BJ (cell line): ENCODE measurements at regions of chr19 and their contacts with region 1.

Region 1: DNA sequence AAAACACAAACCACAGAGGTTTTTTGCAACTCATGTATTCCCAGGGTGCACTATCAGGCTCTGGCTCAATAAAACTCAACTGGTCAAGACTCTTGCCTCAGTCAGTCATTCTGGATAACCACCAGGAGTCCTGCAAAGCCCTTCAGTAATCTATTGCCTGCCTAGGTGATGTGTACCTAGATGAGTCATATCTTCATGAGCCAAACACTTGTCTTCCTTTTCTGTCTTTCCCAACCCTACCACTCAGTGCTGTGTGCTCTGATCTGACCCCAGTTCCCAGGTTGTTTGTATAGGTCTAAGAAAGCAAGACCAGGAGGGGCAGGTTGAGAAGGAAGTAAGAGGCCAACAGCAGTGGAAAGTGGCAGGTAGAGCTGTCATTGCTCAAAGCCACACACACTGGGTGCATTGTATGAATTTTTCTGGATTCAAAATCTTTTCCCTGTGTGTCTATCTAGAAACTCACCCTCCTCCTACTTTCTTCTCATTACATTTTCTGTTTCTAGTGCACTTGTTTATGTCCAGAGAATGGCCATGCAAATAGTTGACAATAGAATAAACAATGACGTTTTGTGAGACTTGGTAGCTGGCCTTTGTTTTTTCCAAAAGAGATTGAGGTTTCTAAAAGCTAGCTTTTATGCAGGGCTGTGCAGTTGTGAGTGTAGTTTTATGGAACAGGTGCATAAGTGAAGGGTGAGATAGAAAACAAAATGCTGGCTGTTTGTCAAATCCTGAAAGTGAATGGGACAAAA is 48.1 kb downstream of the PSG1 start:
- DNase-seq: no peak
- H3K4me3 ChIP-seq: no peak overlapping the region
- H3K27me3 ChIP-seq: no peaks in the 10 kb centered on the region
- CTCF ChIP-seq: no peak

Region 2: GRCh38 chr19:42652021-42652420 is 179.4 kb before region 1 on chr19:
- CTCF ChIA-PET with region 1: no interaction called
- POLR2A ChIA-PET with region 1: no interaction called
- DNase-seq: no peak
- H3K4me3 ChIP-seq: no peak overlapping the region
- H3K27me3 ChIP-seq: peaks cover 11% of the 10 kb centered on the region
- CTCF ChIP-seq: no peak

Region 3: GRCh38 chr19:42816894-42817293 is 14.6 kb before region 1 on chr19:
- CTCF ChIA-PET with region 1: no interaction called
- POLR2A ChIA-PET with region 1: interaction called, 13 read pairs
- DNase-seq: no peak
- H3K4me3 ChIP-seq: no peak overlapping the region
- H3K27me3 ChIP-seq: no peaks in the 10 kb centered on the region
- CTCF ChIP-seq: no peak

Region 4: GRCh38 chr19:42926781-42927180 is 95.3 kb after region 1 on chr19:
- CTCF ChIA-PET with region 1: no interaction called
- POLR2A ChIA-PET with region 1: no interaction called
- DNase-seq: no peak
- H3K4me3 ChIP-seq: no peak overlapping the region
- H3K27me3 ChIP-seq: no peaks in the 10 kb centered on the region
- CTCF ChIP-seq: no peak